ENCODE measurements at regions of chr5 and their contacts with region 1.

Region 1: DNA sequence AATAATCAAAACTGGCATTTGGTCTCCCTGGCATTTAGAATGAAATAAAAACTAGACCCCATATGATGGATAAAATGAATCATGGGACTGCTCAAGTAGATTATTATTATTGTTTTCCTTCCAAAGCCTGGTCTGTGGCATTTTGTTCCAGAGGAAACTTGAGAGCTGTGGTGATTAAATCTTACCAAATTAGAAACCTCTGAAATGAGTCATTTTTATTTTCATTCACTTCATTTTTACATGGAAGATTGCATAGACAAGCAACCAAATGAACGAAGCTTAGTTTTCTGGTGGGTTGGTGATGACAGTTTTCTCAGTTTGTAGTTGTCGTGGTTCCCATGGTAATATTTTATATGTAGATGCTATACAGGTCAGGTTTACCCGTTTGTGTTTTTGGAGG is 23.4 kb downstream of the PAM start:
- DNase-seq: peak; percentile 58
- H3K4me3 Mint-ChIP-seq: no peak overlapping the region
- H3K27ac Mint-ChIP-seq: peak overlapping the region; percentile 46
- H3K4me1 Mint-ChIP-seq: peaks cover 31% of the 10 kb centered on the region
- H3K27me3 Mint-ChIP-seq: no peaks in the 10 kb centered on the region
- CTCF ChIP-seq: no peak

Region 2: GRCh38 chr5:102589661-102590060 is 188.8 kb before region 1 on chr5:
- CTCF ChIA-PET with region 1: interaction called, 5 read pairs
- POLR2A ChIA-PET with region 1: no interaction called
- intact Hi-C with region 1: loop called (anchors 5 kb)
- DNase-seq: peak; percentile 18
- H3K4me3 Mint-ChIP-seq: no peak overlapping the region
- H3K27ac Mint-ChIP-seq: no peak overlapping the region
- H3K4me1 Mint-ChIP-seq: peaks cover 6% of the 10 kb centered on the region
- H3K27me3 Mint-ChIP-seq: no peaks in the 10 kb centered on the region
- CTCF ChIP-seq: no peak

Region 3: GRCh38 chr5:102762095-102762534 is 16.4 kb before region 1 on chr5:
- CTCF ChIA-PET with region 1: interaction called, 24 read pairs
- POLR2A ChIA-PET with region 1: interaction called, 11 read pairs
- intact Hi-C with region 1: no loop called
- DNase-seq: peak; percentile 69
- H3K4me3 Mint-ChIP-seq: peak overlapping the region; percentile 66
- H3K27ac Mint-ChIP-seq: peak overlapping the region; percentile 81
- H3K4me1 Mint-ChIP-seq: peaks cover 46% of the 10 kb centered on the region
- H3K27me3 Mint-ChIP-seq: no peaks in the 10 kb centered on the region
- CTCF ChIP-seq: no peak

Region 4: GRCh38 chr5:102971697-102972293 is 193.3 kb after region 1 on chr5:
- CTCF ChIA-PET with region 1: interaction called, 8 read pairs
- POLR2A ChIA-PET with region 1: no interaction called
- intact Hi-C with region 1: loop called (anchors 1 kb)
- DNase-seq: peak; percentile 11
- H3K4me3 Mint-ChIP-seq: no peak overlapping the region
- H3K27ac Mint-ChIP-seq: no peak overlapping the region
- H3K4me1 Mint-ChIP-seq: no peaks in the 10 kb centered on the region
- H3K27me3 Mint-ChIP-seq: no peaks in the 10 kb centered on the region
- CTCF ChIP-seq: peak; percentile 32

Region 5: DNA sequence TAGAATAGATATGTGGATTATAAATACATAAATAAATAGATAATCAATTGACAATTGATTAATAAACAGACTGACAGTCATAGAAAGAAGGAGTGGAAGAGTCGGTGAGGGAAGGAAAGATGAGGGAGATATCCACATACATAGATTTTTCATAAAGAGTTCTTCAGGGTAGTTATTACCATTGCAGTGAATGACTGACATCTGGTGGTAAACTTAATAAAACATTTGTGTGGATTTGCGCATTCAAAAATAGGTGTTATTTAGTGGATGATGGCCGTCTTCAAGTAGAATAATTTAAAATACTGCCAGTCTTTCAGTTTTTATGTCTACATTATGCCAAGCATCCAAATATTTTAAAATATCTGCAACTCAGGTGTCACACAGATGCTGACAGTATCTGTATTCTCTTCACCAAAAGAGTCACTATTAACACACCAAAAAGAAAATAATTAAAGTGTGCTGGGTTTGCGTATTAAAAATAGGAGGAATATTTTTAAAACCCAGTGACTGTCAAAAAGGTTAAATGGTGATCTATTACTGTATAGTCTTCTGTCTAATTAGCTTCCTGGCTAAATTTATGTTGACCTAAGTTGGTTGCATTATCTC is 262.7 kb after region 1 on chr5:
- CTCF ChIA-PET with region 1: interaction called, 14 read pairs
- POLR2A ChIA-PET with region 1: interaction called, 3 read pairs
- intact Hi-C with region 1: loop called (anchors 1 kb)
- DNase-seq: peak; percentile 59
- H3K4me3 Mint-ChIP-seq: no peak overlapping the region
- H3K27ac Mint-ChIP-seq: no peak overlapping the region
- H3K4me1 Mint-ChIP-seq: no peaks in the 10 kb centered on the region
- H3K27me3 Mint-ChIP-seq: no peaks in the 10 kb centered on the region
- CTCF ChIP-seq: peak; percentile 53

Measured in MCF 10A (cell line).